AG04450 (cell line): ENCODE measurements at regions of chr4 and their contacts with region 1.

Region 1: DNA sequence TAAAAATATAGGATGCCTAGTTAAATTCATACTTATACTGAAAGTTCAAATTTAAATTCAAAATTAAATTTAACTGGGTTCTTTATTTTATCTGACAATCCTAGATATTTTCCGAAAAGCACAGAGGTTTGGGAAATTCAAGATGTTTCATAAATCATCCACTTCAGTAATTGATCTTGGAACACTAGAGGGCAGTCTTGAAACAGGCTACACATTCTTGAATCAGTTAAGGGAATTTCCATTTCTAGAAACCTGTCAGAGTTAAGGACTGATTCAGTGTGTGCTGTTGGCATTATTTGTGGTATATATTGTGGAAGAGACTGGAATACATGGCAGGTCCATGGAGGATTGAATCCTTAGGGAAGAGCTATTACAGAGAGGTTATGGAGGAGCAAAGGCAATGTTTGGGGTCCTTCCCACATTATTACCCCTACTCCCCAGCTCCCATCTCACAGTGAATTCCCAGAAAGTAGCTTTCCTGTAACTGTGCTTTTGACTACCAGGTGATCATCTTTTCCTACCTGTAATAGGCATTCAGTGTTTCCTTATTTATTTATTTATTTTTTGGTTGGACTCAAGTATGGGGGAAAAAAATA is 92.9 kb downstream of the EGF start:
- DNase-seq: peak; percentile 43
- H3K4me3 ChIP-seq: no peak overlapping the region
- H3K27ac ChIP-seq: no peak overlapping the region
- H3K27me3 ChIP-seq: no peaks in the 10 kb centered on the region
- CTCF ChIP-seq: peak; percentile 82

Region 2: GRCh38 chr4:110020139-110020538 is 14.6 kb after region 1 on chr4:
- CTCF ChIA-PET with region 1: interaction called, 17 read pairs
- POLR2A ChIA-PET with region 1: no interaction called
- DNase-seq: no peak
- H3K4me3 ChIP-seq: no peak overlapping the region
- H3K27ac ChIP-seq: no peak overlapping the region
- H3K27me3 ChIP-seq: peaks cover 2% of the 10 kb centered on the region
- CTCF ChIP-seq: no peak

Region 3: GRCh38 chr4:110487873-110488272 is 482.3 kb after region 1 on chr4:
- CTCF ChIA-PET with region 1: interaction called, 15 read pairs
- POLR2A ChIA-PET with region 1: no interaction called
- DNase-seq: no peak
- H3K4me3 ChIP-seq: no peak overlapping the region
- H3K27ac ChIP-seq: no peak overlapping the region
- H3K27me3 ChIP-seq: no peaks in the 10 kb centered on the region
- CTCF ChIP-seq: no peak